CD4-positive, alpha-beta memory T cell (primary cell): ENCODE measurements at regions of chr20 and their contacts with region 1.

Region 1: GRCh38 chr20:40049854-40050253 is 639.2 kb downstream of the MAFB start:
- DNase-seq: no peak
- H3K4me3 ChIP-seq: no peak overlapping the region
- H3K4me3 Mint-ChIP-seq: no peak overlapping the region
- H3K27ac ChIP-seq: no peak overlapping the region
- H3K27ac Mint-ChIP-seq: no peak overlapping the region
- H3K4me1 ChIP-seq: no peaks in the 10 kb centered on the region
- H3K4me1 Mint-ChIP-seq: no peaks in the 10 kb centered on the region
- H3K27me3 ChIP-seq: no peaks in the 10 kb centered on the region
- H3K27me3 Mint-ChIP-seq: peaks cover 0 to 1% of the 10 kb centered on the region in 2 donors

Region 2: DNA sequence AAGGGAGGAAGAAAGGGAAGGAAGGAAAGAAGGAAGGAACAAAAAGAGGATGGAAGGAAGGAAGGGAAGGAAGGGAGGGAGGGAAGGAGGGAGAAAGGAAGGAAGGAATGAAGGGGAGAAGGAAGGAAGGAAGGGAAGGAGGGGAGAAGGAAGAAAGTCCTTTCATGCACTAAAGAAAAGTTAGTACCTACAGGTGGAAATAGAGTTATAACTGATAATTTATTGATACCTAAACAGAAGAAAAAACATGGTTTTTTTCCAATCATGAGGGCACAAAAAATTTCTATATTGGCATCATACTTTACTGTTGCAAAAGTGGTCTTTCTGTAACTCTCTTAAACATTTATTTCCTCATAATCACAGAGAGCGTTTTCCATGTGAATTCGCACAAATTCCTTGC is 20.3 kb before region 1 on chr20:
- CTCF ChIA-PET with region 1: no interaction called
- POLR2A ChIA-PET with region 1: no interaction called
- intact Hi-C with region 1: loop called (anchors 1 kb)
- DNase-seq: no peak
- H3K4me3 ChIP-seq: no peak overlapping the region
- H3K4me3 Mint-ChIP-seq: no peak overlapping the region
- H3K27ac ChIP-seq: no peak overlapping the region
- H3K27ac Mint-ChIP-seq: no peak overlapping the region
- H3K4me1 ChIP-seq: no peaks in the 10 kb centered on the region
- H3K4me1 Mint-ChIP-seq: no peaks in the 10 kb centered on the region
- H3K27me3 ChIP-seq: no peaks in the 10 kb centered on the region
- H3K27me3 Mint-ChIP-seq: peaks cover 0 to 2% of the 10 kb centered on the region in 2 donors